Tibial artery (tissue), 4 donors: ENCODE measurements at regions of chr14 and their contacts with region 1.

Region 1: DNA sequence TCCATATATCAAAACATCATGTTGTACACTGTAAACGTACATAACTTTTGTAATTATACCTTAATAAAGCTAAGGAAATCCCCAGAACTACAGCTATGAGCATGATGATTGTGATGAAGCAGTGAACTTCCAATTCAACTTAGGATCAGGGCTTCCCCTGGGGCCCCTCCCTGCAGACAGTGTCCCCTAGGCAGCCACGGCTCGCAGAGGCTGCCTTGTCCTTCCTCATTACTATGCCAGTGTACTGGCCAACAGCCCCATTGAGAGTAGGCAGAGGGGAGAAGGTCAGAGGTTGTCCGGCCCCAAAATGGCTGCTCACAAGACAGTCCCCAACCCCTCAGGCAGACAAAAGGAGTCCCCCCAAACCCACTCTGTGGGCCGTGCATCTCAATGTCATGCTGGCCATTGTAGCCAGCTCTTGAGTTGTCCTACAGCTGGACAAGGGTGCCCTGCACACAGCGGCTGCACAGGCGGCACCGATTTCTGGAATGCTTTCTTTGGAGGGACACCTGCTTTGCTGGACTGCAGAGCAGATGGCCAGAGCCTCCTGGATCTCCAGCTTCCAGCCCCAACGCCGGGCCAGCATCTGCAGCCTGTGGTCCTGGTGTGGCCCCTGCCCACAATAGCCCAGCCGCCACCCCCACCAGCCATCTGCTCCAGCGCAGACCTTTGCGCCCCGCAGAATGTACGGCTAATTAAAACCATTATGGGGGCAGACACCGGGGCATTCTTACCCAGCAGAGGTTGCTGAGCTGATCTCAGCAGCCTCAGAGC is 46.1 kb downstream of the NIN start:
- DNase-seq: no peak
- H3K4me3 ChIP-seq: no peak overlapping the region
- H3K27ac ChIP-seq: no peak overlapping the region
- H3K4me1 ChIP-seq: no peaks in the 10 kb centered on the region
- H3K27me3 ChIP-seq: no peaks in the 10 kb centered on the region
- CTCF ChIP-seq: no peak

Region 2: DNA sequence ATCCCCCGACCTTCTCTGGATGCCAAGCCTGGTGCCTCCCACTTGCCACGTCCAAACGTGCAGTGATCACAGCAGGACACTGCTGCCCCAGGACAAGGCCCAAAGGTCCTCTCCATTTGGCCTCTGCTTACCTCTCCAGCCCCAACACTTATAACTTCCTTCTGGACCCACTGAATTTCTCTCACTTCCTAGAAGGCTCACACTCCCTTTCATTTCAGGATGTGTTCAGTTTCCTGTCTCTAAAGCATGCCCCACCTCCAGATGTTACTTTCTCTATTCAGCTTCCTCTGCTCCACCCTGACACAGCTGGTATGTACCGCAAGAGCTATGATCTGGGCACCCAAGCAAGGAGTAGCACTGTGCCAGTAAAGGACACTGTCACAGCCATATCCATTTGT is 421.2 kb before region 1 on chr14:
- intact Hi-C with region 1: no loop called
- DNase-seq: no peak
- H3K4me3 ChIP-seq: peak overlapping the region; percentile 25 to 27
- H3K27ac ChIP-seq: peak overlapping the region; percentile 3 to 46
- H3K4me1 ChIP-seq: peaks cover 0 to 13% (median 1%) of the 10 kb centered on the region in 4 donors
- H3K27me3 ChIP-seq: no peaks in the 10 kb centered on the region
- CTCF ChIP-seq: no peak

Region 3: DNA sequence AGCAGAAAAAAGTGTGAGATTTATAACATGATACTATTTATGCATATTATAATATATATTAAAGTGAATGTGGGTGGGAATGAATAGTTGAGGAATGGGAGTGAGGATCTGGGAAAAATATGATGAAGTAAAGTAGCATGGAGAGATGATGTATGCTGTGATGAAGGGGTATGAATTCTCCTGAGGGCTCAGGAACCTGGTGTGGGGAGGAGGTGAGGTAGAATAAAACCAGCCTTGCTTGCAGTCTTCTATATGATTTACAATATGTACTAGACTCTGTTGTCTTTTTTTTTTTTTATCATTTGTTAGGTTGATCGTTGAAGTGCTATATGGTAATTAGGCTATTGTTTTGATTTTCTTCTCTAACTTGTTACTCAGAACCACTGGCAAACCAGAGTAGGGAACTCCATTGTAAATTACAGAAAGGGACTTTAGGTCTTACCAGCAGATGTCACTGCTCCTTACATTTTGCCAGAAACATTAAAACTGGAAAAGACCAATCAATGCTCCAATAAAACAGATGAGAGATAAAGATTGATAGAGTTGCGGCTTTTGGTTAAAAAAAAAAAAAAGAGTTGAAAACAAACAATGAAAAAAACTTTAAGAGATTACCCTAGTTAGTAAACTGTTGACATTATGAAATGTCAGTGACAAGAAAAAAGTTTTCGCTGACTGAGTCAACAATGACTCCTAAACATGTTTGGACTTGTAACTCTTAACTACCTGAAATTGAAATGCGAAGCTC is 185.0 kb before region 1 on chr14:
- intact Hi-C with region 1: loop called (anchors 5 kb)
- DNase-seq: no peak
- H3K4me3 ChIP-seq: no peak overlapping the region
- H3K27ac ChIP-seq: no peak overlapping the region
- H3K4me1 ChIP-seq: no peaks in the 10 kb centered on the region
- H3K27me3 ChIP-seq: no peaks in the 10 kb centered on the region
- CTCF ChIP-seq: peak; percentile 51 to 53

Region 4: GRCh38 chr14:50839048-50839447 is 54.2 kb after region 1 on chr14:
- intact Hi-C with region 1: no loop called
- DNase-seq: no peak
- H3K4me3 ChIP-seq: no peak overlapping the region
- H3K27ac ChIP-seq: no peak overlapping the region
- H3K4me1 ChIP-seq: no peaks in the 10 kb centered on the region
- H3K27me3 ChIP-seq: peaks cover 0 to 3% of the 10 kb centered on the region in 2 donors
- CTCF ChIP-seq: no peak